Natural killer cell (primary cell): ENCODE measurements at regions of chr9 and their contacts with region 1.

Region 1: DNA sequence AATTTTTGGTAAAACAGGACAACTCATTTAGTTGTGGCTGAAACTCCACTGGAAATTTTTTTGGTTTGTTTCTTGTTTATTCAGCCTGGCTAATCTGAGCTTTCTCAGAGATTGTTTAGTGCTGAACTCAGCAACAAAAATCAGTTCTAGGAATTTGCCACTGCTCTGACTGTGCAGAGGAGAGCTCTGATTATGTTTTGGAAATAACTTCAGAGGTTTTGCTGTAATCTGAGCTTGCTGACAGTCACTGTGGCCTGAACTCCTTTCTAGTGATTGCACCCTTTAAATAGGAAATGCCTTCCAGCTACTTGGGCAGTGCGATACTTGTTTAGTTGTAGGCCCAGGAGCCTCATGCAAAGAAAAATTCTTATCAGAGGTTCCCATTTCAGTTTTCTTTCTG is 60.2 kb downstream of the OSTF1 start:
- DNase-seq: peak in 1 of 2 donors; percentile 34
- ATAC-seq: no peak
- H3K4me3 ChIP-seq: no peak overlapping the region
- H3K4me3 Mint-ChIP-seq: peak overlapping the region; percentile 70
- H3K27ac ChIP-seq: peak overlapping the region; percentile 57
- H3K27ac Mint-ChIP-seq: peak overlapping the region; percentile 86 to 97
- H3K4me1 ChIP-seq: peaks cover 51% of the 10 kb centered on the region
- H3K4me1 Mint-ChIP-seq: peaks cover 85 to 87% of the 10 kb centered on the region in 2 donors
- H3K27me3 ChIP-seq: no peaks in the 10 kb centered on the region
- H3K27me3 Mint-ChIP-seq: no peaks in the 10 kb centered on the region
- CTCF ChIP-seq: no peak

Region 2: DNA sequence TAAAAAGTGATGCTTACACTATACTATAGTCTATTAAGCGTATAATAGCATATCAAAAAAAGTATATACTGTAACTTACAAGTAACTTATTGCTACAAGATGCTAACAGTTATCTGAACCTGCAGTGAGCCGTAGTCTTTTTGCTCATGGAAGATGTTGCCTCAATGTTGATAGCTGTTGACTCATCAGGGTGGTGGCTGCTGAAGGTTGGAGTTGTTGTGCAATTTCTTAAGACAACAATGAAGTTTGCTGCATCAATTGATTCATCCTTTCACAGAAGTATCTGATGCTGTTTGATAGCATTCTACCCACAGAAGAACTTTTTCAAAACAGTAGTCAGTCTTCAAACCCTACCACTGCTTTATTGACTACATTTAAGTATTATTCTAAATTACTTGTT is 188.0 kb before region 1 on chr9:
- intact Hi-C with region 1: loop called (anchors 2 kb)
- DNase-seq: no peak
- ATAC-seq: peak; percentile 59 to 70 (median 60)
- H3K4me3 ChIP-seq: no peak overlapping the region
- H3K4me3 Mint-ChIP-seq: peak overlapping the region; percentile 59
- H3K27ac ChIP-seq: no peak overlapping the region
- H3K27ac Mint-ChIP-seq: peak overlapping the region; percentile 72 to 84
- H3K4me1 ChIP-seq: peaks cover 7% of the 10 kb centered on the region
- H3K4me1 Mint-ChIP-seq: peaks cover 44 to 60% of the 10 kb centered on the region in 2 donors
- H3K27me3 ChIP-seq: no peaks in the 10 kb centered on the region
- H3K27me3 Mint-ChIP-seq: no peaks in the 10 kb centered on the region
- CTCF ChIP-seq: no peak

Region 3: DNA sequence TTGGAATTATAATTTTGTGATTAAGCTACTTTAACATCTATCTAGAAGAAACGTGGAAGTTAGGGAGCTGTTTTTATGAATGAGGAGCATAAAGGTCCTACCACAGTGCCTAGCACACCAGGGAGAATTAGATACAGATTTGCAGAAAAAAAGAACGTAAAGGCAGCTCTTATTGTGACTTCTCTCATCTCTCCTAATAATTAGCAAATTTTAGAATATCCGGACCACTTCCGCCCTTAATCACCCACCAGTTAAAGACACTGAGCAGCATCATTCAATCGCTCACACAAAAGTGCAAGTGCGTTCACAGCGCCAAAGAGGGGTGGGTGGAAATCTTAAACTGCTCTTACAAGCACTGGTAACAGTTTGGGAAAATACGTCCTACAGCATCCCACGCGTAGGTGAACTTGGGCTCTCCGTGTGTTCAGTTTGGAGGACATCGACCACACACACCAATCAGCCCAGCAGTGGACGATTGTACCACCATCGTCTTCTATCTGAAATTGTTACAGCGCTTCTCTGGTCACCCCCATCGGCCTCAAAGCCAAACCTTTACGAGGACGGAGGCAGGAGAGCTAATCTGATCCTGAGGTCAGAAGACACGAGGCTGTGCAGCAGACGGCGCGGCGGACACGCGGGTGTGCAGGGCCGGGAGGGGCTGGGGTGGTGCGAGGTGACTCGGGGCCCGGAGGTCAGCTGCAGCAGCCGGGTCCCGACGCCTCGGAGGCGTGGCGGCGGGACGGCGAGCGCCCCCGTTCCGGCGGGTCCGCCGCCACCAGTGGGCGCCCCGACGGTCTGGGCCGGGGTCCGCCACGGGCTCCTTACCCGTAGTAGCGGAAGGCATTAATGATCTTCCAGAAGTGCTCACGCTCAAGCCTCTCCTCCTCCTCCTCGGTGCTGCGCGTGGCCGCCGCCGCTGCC is 121.1 kb before region 1 on chr9:
- intact Hi-C with region 1: loop called (anchors 5 kb)
- DNase-seq: peak in 1 of 2 donors; percentile 66
- ATAC-seq: peak; percentile 26 to 43 (median 31)
- H3K4me3 ChIP-seq: peak overlapping the region; percentile 74
- H3K4me3 Mint-ChIP-seq: peak overlapping the region; percentile 92
- H3K27ac ChIP-seq: peak overlapping the region; percentile 85
- H3K27ac Mint-ChIP-seq: peak overlapping the region; percentile 87 to 97
- H3K4me1 ChIP-seq: peaks cover 19% of the 10 kb centered on the region
- H3K4me1 Mint-ChIP-seq: peaks cover 25 to 32% of the 10 kb centered on the region in 2 donors
- H3K27me3 ChIP-seq: no peaks in the 10 kb centered on the region
- H3K27me3 Mint-ChIP-seq: peaks cover 0 to 3% of the 10 kb centered on the region in 2 donors
- CTCF ChIP-seq: peak; percentile 50

Region 4: DNA sequence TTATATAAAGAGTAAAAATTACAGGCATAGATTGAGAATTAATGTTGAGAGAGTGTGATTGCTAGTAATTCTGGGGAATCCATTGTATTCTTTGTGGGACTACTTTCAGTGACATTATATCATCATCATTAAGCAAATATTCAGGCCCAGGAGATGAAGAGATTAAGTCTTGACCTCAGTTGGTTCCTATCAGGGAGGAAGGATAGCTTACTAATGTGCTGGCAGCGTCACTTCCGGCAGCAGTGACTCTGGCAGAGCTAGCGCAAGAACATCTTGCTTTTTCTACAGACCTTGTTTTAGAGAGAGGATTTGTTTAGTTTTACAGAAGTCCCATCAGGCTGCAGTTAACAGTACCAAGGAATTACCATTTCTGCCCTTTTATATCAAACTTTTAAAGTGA is 40.0 kb before region 1 on chr9:
- intact Hi-C with region 1: loop called (anchors 5 kb)
- DNase-seq: peak in 1 of 2 donors; percentile 46
- ATAC-seq: peak; percentile 71 to 84 (median 77)
- H3K4me3 ChIP-seq: no peak overlapping the region
- H3K4me3 Mint-ChIP-seq: peak overlapping the region; percentile 69
- H3K27ac ChIP-seq: peak overlapping the region; percentile 50
- H3K27ac Mint-ChIP-seq: peak overlapping the region; percentile 69 to 88
- H3K4me1 ChIP-seq: peaks cover 50% of the 10 kb centered on the region
- H3K4me1 Mint-ChIP-seq: peaks cover 70 to 78% of the 10 kb centered on the region in 2 donors
- H3K27me3 ChIP-seq: no peaks in the 10 kb centered on the region
- H3K27me3 Mint-ChIP-seq: no peaks in the 10 kb centered on the region
- CTCF ChIP-seq: no peak

Region 5: GRCh38 chr9:75138260-75139040 is 10.1 kb before region 1 on chr9:
- intact Hi-C with region 1: loop called (anchors 1 kb)
- DNase-seq: peak in 1 of 2 donors; percentile 21
- ATAC-seq: peak; percentile 79 to 86 (median 83)
- H3K4me3 ChIP-seq: no peak overlapping the region
- H3K4me3 Mint-ChIP-seq: peak overlapping the region; percentile 70
- H3K27ac ChIP-seq: peak overlapping the region; percentile 45
- H3K27ac Mint-ChIP-seq: peak overlapping the region; percentile 77 to 87
- H3K4me1 ChIP-seq: peaks cover 29% of the 10 kb centered on the region
- H3K4me1 Mint-ChIP-seq: peaks cover 60 to 91% of the 10 kb centered on the region in 2 donors
- H3K27me3 ChIP-seq: no peaks in the 10 kb centered on the region
- H3K27me3 Mint-ChIP-seq: no peaks in the 10 kb centered on the region
- CTCF ChIP-seq: no peak

Region 6: DNA sequence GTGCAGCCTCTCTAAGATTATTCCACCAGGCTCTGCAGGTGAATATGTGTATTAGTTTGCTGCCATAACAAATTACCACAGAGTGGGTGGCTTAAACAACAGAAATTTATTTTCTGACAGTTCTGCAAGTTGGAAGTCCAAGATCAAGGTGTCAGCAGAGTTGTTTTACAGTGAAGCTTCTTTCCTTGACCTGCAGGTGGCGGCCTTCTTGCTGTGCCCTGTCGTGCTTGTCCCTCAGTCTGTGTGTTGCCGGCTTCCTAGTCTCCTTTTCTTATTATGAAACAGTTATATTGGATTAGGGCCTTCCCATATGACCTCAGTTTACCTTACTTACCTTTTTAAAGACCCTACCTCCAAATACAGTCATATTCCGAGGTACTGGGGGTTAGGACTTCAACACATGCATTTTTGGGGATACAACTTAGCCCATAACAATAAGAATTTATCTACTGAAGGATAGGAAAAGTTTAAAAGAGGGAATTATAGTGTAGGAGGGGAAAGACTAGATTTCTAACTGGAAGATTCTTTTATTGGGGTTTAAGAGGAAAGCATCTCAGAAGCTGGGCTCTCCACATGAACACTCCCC is 37.1 kb after region 1 on chr9:
- intact Hi-C with region 1: loop called (anchors 5 kb)
- DNase-seq: peak; percentile 25 to 67
- ATAC-seq: peak; percentile 65 to 80 (median 70)
- H3K4me3 ChIP-seq: no peak overlapping the region
- H3K4me3 Mint-ChIP-seq: no peak overlapping the region
- H3K27ac ChIP-seq: no peak overlapping the region
- H3K27ac Mint-ChIP-seq: peak overlapping the region; percentile 50 to 75
- H3K4me1 ChIP-seq: no peaks in the 10 kb centered on the region
- H3K4me1 Mint-ChIP-seq: peaks cover 32 to 36% of the 10 kb centered on the region in 2 donors
- H3K27me3 ChIP-seq: no peaks in the 10 kb centered on the region
- H3K27me3 Mint-ChIP-seq: no peaks in the 10 kb centered on the region
- CTCF ChIP-seq: peak; percentile 64